ENCODE measurements at regions of chr10 and their contacts with region 1.

Region 1: GRCh38 chr10:23358357-23358756 is 13.8 kb upstream of the C10orf67 start:
- DNase-seq: no peak
- ATAC-seq: no peak

Region 2: DNA sequence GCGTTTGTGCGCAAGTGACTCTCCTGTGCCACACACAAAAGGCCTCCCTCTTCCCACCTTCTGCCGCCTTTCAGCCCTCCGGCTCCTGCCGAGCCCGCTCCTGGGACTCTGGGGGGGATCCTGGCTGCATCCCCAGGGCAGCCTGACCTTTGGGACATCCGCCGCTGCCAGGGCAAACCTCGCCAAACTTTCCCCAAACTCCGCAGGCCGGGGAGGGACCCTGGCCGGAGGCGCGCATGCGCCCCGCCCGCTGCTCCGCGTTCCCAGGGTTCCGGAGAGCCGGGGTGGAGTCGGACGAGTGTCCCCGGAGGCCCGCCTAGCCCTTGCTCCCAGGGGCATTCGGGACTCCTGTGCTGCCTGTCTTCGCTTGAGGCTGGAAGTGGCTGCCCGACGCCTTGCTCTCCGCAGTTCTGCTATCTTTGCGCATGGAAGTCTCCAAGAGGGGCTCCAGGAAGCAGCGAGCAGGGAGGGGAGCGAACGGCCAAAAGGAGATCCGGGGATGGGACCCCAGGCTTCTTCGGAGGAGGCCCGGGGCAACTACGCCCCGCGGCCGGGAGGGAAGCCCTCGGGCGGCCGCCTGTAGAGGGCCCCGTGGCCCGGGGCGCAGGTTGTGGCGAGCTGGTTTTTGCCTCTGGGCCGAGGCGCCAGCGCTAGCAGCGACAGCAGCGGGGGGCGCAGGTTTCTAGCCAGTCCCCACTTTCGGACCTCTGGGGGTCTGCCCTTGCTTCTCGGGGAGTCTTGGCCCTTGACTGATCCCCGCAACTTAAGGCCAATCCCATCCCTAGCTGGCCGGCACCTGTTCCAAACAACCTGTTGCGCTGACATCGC is 159.2 kb before region 1 on chr10:
- intact Hi-C with region 1: no loop called
- DNase-seq: no peak
- ATAC-seq: no peak

Region 3: DNA sequence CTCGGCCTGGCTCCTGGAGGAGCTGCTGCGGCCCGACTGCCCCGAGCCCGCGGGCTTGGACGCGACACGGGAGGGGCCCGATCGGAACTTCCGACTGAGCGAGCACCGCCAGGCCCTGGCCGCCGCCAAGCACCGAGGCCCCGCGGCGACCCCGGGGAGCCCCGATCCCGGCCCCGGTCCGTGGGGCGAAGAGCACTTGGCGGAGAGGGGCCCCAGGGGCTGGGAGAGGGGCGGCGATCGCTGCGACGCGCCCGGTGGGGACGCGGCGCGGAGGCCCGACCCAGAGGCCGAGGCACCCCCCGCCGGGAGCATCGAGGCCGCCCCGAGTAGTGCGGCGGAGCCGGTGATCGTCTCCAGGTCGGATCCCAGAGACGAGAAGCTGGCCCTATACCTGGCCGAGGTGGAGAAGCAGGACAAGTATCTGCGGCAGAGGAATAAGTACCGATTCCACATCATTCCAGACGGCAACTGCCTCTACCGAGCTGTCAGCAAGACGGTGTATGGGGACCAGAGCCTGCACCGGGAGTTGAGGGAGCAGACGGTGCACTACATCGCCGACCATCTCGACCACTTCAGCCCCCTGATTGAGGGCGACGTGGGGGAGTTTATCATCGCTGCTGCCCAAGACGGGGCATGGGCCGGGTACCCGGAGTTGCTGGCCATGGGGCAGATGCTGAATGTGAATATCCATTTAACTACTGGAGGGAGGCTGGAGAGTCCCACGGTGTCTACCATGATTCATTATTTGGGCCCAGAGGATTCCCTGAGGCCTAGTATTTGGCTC is 81.8 kb after region 1 on chr10:
- intact Hi-C with region 1: loop called (anchors 5 kb)
- DNase-seq: peak; percentile 58
- ATAC-seq: no peak

Measured in Right ventricle myocardium superior (tissue), 1 donor.